ENCODE measurements at regions of chr11 and their contacts with region 1.

Region 1: GRCh38 chr11:73184953-73185671 is 33.0 kb upstream of the P2RY2 start:
- DNase-seq: peak; percentile 70
- H3K4me3 ChIP-seq: no peak overlapping the region
- H3K27ac ChIP-seq: peak overlapping the region in 1 of 2 donors; percentile 35
- H3K4me1 ChIP-seq: peaks cover 13% of the 10 kb centered on the region
- H3K27me3 ChIP-seq: no peaks in the 10 kb centered on the region
- CTCF ChIP-seq: peak; percentile 56 to 81 (median 76)
- POLR2A ChIP-seq: no peak

Region 2: GRCh38 chr11:73012121-73012863 is 172.8 kb before region 1 on chr11:
- intact Hi-C with region 1: no loop called
- DNase-seq: no peak
- H3K4me3 ChIP-seq: no peak overlapping the region
- H3K27ac ChIP-seq: no peak overlapping the region
- H3K4me1 ChIP-seq: no peaks in the 10 kb centered on the region
- H3K27me3 ChIP-seq: no peaks in the 10 kb centered on the region
- CTCF ChIP-seq: no peak
- POLR2A ChIP-seq: no peak

Region 3: DNA sequence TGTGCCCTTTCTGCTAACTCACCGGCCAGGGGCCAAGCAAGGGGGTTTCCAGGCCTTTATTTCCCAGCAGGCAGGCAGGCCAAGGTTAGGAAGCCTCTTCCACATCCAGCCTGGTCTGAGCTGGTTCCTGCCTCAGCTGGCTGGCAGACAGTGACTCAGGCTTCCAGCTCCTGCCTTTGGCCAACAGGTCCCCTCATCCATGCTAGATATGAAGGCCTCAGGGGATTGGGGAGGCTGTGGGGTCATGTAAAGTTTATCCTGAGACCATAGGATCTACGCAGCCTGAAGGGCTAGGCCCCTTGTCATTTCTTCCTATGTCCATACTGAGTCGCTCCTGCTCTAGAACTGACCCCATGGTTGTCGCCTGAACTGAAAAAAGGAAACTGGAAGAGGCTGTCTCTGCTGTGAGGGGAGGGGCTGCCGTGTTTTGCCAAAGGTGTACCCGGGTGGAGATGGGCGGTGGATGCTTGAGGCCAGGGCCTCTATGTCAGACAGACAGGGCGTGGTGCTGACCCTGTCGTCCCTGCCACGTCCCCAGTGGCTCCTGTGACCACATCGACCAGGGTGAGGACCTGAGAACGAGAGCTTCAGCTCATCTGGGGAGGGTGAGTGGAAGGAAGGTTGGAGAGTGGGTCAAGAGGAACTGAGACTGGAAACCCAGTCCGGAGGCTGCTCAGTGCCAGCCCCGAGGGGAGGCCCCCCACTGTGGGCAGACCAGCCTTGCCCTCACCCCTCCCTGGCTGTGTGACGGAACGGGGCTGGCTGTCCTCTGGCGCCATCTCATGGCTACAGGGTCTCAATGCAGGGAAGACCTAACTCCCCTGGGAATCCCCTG is 104.0 kb after region 1 on chr11:
- intact Hi-C with region 1: loop called (anchors 10 kb)
- DNase-seq: peak; percentile 80
- H3K4me3 ChIP-seq: no peak overlapping the region
- H3K27ac ChIP-seq: peak overlapping the region in 1 of 2 donors; percentile 57
- H3K4me1 ChIP-seq: peaks cover 25% of the 10 kb centered on the region
- H3K27me3 ChIP-seq: no peaks in the 10 kb centered on the region
- CTCF ChIP-seq: peak; percentile 77 to 90 (median 90)
- POLR2A ChIP-seq: no peak

Region 4: GRCh38 chr11:73335204-73335923 is 150.3 kb after region 1 on chr11:
- intact Hi-C with region 1: no loop called
- DNase-seq: peak; percentile 87
- H3K4me3 ChIP-seq: no peak overlapping the region
- H3K27ac ChIP-seq: peak overlapping the region; percentile 69 to 79
- H3K4me1 ChIP-seq: peaks cover 59% of the 10 kb centered on the region
- H3K27me3 ChIP-seq: no peaks in the 10 kb centered on the region
- CTCF ChIP-seq: peak; percentile 86 to 99 (median 90)
- POLR2A ChIP-seq: no peak

Measured in testis (tissue), 5 donors.